MCF 10A (cell line): ENCODE measurements at regions of chr12 and their contacts with region 1.

Region 1: GRCh38 chr12:57520053-57520871 is at the start of gene DDIT3:
- DNase-seq: peak; percentile 99
- H3K4me3 Mint-ChIP-seq: peak within 1 kb of the TSS; percentile 90
- H3K27ac Mint-ChIP-seq: peak within 1 kb of the TSS; percentile 98
- H3K4me1 Mint-ChIP-seq: peaks cover 50% of the 10 kb centered on the region
- H3K27me3 Mint-ChIP-seq: no peaks in the 10 kb centered on the region
- CTCF ChIP-seq: no peak
- total RNA-seq, gene DDIT3: 156 and 168 TPM in 2 replicates

Region 2: GRCh38 chr12:57488402-57489155 is 31.7 kb before region 1 on chr12:
- CTCF ChIA-PET with region 1: interaction called, 4 read pairs
- POLR2A ChIA-PET with region 1: interaction called, 10 read pairs
- intact Hi-C with region 1: no loop called
- DNase-seq: no peak
- H3K4me3 Mint-ChIP-seq: peak overlapping the region; percentile 92
- H3K27ac Mint-ChIP-seq: peak overlapping the region; percentile 87
- H3K4me1 Mint-ChIP-seq: peaks cover 15% of the 10 kb centered on the region
- H3K27me3 Mint-ChIP-seq: peaks cover 3% of the 10 kb centered on the region
- CTCF ChIP-seq: no peak

Region 3: DNA sequence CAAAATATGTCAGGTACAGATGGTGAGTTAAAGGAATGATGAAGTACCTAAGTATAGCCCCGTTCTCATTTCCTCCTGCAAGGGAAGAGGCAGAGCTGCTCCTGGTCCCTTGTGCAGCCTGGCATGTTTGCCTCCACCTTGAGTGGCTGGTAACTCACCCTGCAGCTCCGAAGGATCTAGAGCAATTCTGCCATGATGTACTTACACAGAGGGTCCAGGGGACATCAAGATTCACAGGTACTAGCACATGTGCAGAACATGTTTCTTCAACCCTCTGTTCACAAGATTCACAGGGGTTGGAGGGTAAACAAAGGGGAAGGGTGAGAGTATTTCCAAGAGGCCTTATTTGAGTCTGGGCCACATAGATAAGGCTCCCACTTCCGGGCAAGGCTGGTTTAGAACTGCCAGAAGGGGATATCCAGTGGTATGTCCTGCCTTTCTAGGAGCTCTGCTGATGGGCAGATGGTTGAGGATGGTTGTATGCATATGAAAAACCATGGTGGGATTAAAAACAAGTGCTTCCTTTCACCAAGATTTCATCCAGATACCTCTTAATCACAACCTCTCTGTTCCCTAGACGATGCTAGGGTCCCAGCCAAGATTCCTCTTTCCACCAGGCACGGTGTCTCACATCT is 19.0 kb after region 1 on chr12:
- CTCF ChIA-PET with region 1: interaction called, 5 read pairs
- POLR2A ChIA-PET with region 1: interaction called, 34 read pairs
- intact Hi-C with region 1: no loop called
- DNase-seq: no peak
- H3K4me3 Mint-ChIP-seq: no peak overlapping the region
- H3K27ac Mint-ChIP-seq: peak overlapping the region; percentile 15
- H3K4me1 Mint-ChIP-seq: no peaks in the 10 kb centered on the region
- H3K27me3 Mint-ChIP-seq: no peaks in the 10 kb centered on the region
- CTCF ChIP-seq: no peak

Region 4: GRCh38 chr12:57546438-57547383 is 26.4 kb after region 1 on chr12 and contains the start of gene DCTN2:
- CTCF ChIA-PET with region 1: no interaction called
- POLR2A ChIA-PET with region 1: interaction called, 43 read pairs
- intact Hi-C with region 1: loop called (anchors 1 kb)
- DNase-seq: peak; percentile 98
- H3K4me3 Mint-ChIP-seq: peak within 1 kb of the TSS; percentile 93
- H3K27ac Mint-ChIP-seq: peak within 1 kb of the TSS; percentile 98
- H3K4me1 Mint-ChIP-seq: peaks cover 32% of the 10 kb centered on the region
- H3K27me3 Mint-ChIP-seq: no peaks in the 10 kb centered on the region
- CTCF ChIP-seq: peak; percentile 18
- total RNA-seq, gene DCTN2: 149 and 188 TPM in 2 replicates

Region 5: DNA sequence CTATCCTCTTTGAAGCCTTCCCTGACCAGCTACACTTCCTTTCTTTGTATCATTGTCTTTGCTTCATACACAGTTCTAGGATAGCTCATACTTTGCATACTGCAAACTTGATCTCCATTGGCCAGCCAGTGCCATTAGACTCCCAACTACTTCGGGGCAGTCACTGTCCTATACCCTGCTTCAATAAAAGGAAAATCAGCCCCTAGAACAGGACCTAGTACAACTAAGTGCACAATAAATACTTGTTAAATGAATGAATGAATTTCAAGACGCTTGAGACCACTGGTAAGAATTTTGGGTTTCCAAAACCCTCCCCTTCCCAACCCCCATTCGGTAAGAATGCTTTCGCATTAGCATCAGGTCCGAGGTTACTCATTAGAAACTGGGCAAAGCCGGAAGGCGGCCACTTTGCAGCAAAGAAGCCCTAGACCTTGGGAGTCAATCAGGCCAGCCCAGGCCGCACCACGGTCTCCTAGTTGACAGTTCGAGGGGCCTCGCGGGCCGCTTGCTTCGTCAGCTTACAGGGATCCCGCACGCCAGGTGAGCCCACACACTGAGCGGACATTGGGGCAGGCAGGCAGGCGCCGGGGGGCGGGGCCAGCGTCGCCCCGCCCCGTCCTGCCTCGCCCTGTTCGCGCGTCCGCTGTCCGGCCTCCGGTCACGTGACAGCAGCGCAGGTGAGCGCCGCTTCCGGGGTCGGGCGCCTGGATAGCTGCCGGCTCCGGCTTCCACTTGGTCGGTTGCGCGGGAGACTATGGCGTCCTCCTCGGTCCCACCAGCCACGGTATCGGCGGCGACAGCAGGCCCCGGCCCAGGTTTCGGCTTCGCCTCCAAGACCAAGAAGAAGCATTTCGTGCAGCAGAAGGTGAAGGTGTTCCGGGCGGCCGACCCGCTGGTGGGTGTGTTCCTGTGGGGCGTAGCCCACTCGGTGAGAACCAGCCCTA is 70.5 kb after region 1 on chr12 and contains the start of gene PIP4K2C:
- CTCF ChIA-PET with region 1: no interaction called
- POLR2A ChIA-PET with region 1: interaction called, 16 read pairs
- intact Hi-C with region 1: no loop called
- DNase-seq: peak; percentile 87
- H3K4me3 Mint-ChIP-seq: peak within 1 kb of the TSS; percentile 89
- H3K27ac Mint-ChIP-seq: peak within 1 kb of the TSS; percentile 86
- H3K4me1 Mint-ChIP-seq: peaks cover 16% of the 10 kb centered on the region
- H3K27me3 Mint-ChIP-seq: no peaks in the 10 kb centered on the region
- CTCF ChIP-seq: no peak
- total RNA-seq, gene PIP4K2C: 32.0 and 38.0 TPM in 2 replicates